Posterior vena cava (tissue), 2 donors: ENCODE measurements at regions of chr11 and their contacts with region 1.

Region 1: DNA sequence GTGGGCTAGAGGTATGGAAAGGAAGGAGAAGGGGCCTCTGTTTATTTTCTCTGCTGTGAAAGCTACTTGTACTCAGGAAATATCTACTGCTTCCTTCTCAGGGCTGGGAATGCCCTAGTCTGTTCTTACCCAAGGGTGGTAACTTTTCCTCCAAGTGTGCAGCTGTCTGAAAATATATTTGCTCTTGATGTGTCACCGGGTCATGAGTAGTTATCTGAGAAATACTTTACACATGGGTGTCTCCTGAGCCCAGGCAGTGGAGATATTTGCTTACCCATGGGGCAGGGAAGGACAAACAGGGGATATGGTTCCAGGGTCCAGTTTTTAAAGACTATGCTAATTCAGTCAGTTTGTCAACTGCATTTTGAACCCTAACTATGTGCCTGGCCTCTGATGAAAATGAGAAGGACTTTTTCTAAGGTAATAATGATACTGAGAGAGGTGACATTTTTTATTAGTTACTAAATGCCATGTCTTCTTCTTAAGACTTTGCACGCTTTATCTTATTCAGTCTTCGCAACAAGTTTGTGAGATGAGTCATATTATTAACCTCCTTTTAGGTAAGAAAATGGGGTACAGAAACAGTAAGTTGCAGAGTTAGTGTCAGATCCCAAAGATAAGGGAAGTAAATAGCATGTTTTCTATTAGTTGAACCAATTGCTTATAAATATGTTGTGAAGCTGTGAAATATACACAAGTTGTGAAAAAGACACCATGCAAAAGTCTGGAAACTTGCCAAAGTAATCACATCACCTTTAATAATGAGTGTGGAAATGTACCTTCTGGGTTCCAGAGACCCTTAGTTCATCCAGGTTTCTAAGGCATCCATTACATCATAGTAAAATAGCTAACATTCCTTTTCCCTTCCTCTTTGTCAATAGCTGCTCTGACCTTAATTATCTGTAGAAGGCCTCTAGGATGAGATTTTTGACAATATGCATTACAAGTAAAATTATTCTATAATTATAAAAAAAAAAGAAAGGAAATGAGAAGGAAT is 22.8 kb downstream of the SYTL2 start:
- DNase-seq: no peak

Region 2: DNA sequence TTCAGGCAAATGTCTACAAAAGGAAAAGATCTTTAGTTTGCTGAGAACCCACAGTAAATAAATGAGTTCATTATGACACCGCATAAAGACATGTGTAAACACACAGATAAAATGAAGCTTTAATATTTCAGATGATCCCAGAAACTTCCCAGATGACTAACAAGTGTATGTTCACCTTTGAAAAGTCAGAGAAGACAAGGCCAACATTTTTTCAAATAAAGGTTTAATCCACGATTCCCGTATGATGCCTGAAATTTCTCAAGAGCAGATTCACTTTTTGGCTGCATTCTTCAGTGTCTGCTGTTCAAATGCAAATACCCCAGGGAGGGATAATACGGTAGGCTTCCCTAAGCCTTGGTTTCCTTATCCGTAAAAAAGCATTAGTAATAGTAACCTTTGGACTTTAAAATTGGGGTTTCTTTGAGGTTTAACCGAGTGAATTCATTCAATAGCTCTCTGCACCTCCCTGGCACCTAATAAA is 39.7 kb before region 1 on chr11:
- intact Hi-C with region 1: loop called in 1 of 2 experiments (anchors 5 kb)
- DNase-seq: no peak